Mammary epithelial cell (primary cell): ENCODE measurements at regions of chr7 and their contacts with region 1.

Region 1: DNA sequence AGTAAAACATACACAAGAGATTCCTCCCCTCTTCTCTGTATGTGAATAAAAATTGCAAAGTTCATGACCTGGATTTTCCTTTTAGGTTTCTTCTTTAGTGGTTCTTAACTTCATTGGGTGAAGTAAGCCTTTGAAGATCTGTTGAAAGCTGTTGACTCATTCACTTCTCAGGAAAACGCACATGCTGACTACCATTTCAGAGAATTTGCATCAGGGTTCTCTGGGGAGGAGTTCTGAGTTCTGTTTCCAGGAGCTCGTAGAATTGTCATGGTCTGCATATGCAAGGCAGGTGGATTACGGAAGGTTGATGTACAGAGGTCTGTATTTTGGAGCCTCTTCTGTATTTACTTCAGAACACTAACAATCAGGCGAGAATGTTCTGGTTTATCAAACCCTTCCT is 962 bp upstream of the SLC26A4 start:
- DNase-seq: peak; percentile 67
- H3K4me3 ChIP-seq: no peak overlapping the region
- H3K27ac ChIP-seq: no peak overlapping the region
- H3K4me1 ChIP-seq: peaks cover 8% of the 10 kb centered on the region
- H3K27me3 ChIP-seq: peaks cover 14% of the 10 kb centered on the region
- CTCF ChIP-seq: no peak

Region 2: GRCh38 chr7:107754642-107755041 is 95.0 kb after region 1 on chr7:
- CTCF ChIA-PET with region 1: no interaction called
- dilution Hi-C with region 1: loop called (anchors 5 kb)
- in situ Hi-C with region 1: no loop called
- intact Hi-C with region 1: no loop called
- DNase-seq: no peak
- H3K4me3 ChIP-seq: no peak overlapping the region
- H3K27ac ChIP-seq: no peak overlapping the region
- H3K4me1 ChIP-seq: no peaks in the 10 kb centered on the region
- H3K27me3 ChIP-seq: no peaks in the 10 kb centered on the region
- CTCF ChIP-seq: peak; percentile 5 to 14

Region 3: GRCh38 chr7:107879400-107880035 is 219.9 kb after region 1 on chr7:
- CTCF ChIA-PET with region 1: no interaction called
- dilution Hi-C with region 1: no loop called
- in situ Hi-C with region 1: no loop called
- intact Hi-C with region 1: no loop called
- DNase-seq: peak; percentile 55
- H3K4me3 ChIP-seq: no peak overlapping the region
- H3K27ac ChIP-seq: no peak overlapping the region
- H3K4me1 ChIP-seq: peaks cover 6% of the 10 kb centered on the region
- H3K27me3 ChIP-seq: no peaks in the 10 kb centered on the region
- CTCF ChIP-seq: peak; percentile 82 to 90